ENCODE measurements at regions of chr6 and their contacts with region 1.

Region 1: DNA sequence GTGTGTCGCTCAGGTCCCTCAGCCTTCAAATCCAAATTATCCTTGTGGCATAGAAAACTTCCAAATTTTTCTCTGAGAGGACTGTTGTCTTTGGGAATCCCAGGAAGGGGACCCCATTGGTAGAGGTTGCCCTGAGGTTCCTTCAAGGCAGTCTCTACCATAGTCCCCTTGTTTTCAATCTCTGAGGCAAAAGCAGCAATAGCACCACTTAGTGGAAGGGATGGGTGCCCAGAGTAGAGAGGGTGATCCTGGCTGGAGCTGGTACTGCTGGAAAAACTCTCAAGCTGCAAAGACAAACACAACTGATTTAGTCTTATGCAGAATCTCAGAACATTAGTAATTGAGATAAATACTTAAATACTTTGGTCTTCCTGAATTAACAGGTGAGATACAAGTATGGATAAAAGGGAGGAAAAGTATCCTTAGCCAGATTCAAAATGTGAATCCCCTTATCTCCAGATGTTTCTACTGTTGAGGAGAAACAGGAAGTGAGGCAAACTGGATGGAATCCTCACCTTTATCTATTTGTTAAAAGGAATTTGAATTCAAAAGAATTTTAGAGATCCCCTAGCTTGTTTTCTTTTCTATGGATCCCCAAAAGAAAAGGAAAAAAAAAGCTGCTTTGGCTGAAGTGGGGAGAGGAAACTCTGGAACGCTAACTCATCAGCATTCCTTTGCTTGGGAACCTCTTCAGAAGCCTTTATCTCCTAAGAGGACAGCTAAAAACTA is 13.4 kb downstream of the ZNF318 start:
- DNase-seq: no peak
- H3K4me3 ChIP-seq: no peak overlapping the region
- H3K4me1 ChIP-seq: no peaks in the 10 kb centered on the region
- H3K27me3 ChIP-seq: no peaks in the 10 kb centered on the region

Region 2: GRCh38 chr6:42304053-42304712 is 1051.8 kb before region 1 on chr6:
- in situ Hi-C with region 1: no loop called
- DNase-seq: no peak
- H3K4me3 ChIP-seq: no peak overlapping the region
- H3K4me1 ChIP-seq: no peaks in the 10 kb centered on the region
- H3K27me3 ChIP-seq: no peaks in the 10 kb centered on the region

Region 3: GRCh38 chr6:43506667-43507471 is 150.8 kb after region 1 on chr6:
- in situ Hi-C with region 1: loop called (anchors 10 kb)
- DNase-seq: peak; percentile 71 to 87
- H3K4me3 ChIP-seq: no peak overlapping the region
- H3K4me1 ChIP-seq: peaks cover 6% of the 10 kb centered on the region; the same call in 1 of the 2 replicates
- H3K27me3 ChIP-seq: no peaks in the 10 kb centered on the region

Region 4: DNA sequence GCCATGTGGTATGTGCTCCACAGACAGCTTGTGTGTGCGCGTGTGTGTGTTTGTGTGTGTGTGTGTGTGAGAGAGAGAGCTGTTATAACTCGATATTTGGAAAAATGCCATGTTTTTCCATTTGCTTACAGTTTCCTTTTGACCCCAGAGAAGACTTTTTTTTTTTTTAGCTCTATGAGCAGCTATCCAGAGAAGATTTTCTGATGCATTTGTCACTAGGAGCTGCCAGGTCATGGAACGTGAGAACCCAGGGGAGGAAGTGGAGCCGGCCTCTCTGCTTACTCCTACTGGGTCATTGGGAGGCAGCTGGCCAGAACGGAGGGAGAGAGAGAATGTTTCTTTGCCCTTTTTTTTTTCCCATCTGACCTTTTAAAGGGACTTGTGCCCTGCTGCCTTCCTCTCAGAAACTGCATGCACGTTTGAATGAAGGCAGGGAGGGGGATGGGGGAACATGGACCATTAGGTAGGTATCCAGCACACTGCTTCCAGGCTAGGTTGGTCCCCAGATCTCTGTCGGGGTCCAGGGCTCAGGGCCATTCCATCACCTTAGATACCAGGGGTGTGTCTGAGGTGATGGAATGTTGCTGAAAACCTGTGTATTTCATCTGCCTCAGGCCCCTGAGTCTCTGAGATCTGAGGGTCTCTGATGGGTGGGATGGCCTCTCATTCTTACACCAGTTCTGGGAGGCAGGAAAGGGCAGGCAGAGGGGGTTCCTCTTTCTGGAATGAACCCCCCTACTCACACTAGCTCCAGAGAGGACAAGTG is 342.7 kb after region 1 on chr6:
- in situ Hi-C with region 1: no loop called
- DNase-seq: no peak
- H3K4me3 ChIP-seq: no peak overlapping the region
- H3K4me1 ChIP-seq: peaks cover 14% of the 10 kb centered on the region
- H3K27me3 ChIP-seq: no peaks in the 10 kb centered on the region

Region 5: GRCh38 chr6:43990627-43991619 is 634.9 kb after region 1 on chr6:
- in situ Hi-C with region 1: no loop called
- DNase-seq: no peak
- H3K4me3 ChIP-seq: no peak overlapping the region
- H3K4me1 ChIP-seq: no peaks in the 10 kb centered on the region
- H3K27me3 ChIP-seq: peaks cover 2% of the 10 kb centered on the region; the same call in 1 of the 2 replicates